Lower leg skin (tissue), 4 donors: ENCODE measurements at regions of chr11 and their contacts with region 1.

Region 1: GRCh38 chr11:64900263-64900678 is 16.7 kb downstream of the ATG2A start:
- DNase-seq: no peak
- H3K4me3 ChIP-seq: no peak overlapping the region
- CTCF ChIP-seq: no peak
- POLR2A ChIP-seq: no peak

Region 2: GRCh38 chr11:64516226-64516625 is 384.0 kb before region 1 on chr11:
- intact Hi-C with region 1: no loop called
- DNase-seq: no peak
- H3K4me3 ChIP-seq: no peak overlapping the region
- CTCF ChIP-seq: no peak
- POLR2A ChIP-seq: no peak

Region 3: GRCh38 chr11:64545605-64546004 is 354.7 kb before region 1 on chr11:
- intact Hi-C with region 1: no loop called
- DNase-seq: no peak
- H3K4me3 ChIP-seq: no peak overlapping the region
- CTCF ChIP-seq: no peak
- POLR2A ChIP-seq: no peak

Region 4: GRCh38 chr11:64823568-64824133 is 76.6 kb before region 1 on chr11:
- intact Hi-C with region 1: loop called (anchors 2 kb)
- DNase-seq: no peak
- H3K4me3 ChIP-seq: no peak overlapping the region
- CTCF ChIP-seq: no peak
- POLR2A ChIP-seq: no peak